HEK293 (cell line): ENCODE measurements at regions of chr22 and their contacts with region 1.

Region 1: DNA sequence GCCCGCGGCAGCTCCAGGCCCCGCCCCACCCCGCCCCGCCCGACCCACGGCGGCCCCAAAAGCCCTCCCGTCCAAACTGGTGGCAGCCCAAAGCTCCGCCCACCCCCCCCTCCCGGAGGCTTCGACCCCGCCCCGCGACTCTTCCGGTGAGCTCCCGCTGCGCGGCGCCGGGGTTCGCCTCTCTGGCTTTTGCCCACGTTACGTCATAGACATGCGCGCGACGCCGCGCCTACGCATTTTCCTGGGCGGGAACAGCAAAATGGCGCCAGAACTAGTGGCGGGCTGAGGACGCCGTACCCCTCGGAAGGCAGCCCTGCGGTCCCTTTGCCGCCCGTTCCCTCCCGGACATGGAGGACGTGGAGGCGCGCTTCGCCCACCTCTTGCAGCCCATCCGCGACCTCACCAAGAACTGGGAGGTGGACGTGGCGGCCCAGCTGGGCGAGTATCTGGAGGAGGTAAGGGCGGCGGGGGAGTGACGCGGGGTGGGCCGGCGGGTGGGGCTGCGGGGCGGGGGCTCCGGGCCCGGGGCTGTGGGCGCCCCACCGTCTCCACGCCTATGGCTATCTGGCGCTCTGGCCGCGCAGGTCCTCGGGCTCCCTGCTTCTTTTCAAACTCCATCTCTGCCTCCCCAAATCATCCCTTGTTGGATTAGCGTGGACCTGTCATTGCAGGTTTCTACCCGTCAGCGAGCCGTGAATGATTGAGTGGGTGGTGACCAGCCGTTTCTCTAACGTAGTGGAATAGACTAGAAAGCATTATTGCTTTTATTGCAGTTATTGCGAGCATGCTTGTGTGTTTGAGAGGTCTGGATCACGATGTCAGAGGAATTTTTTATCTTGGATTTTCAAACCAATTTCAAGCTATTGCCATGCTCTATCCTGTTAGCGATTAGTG is at the start of gene NCAPH2:
- H3K4me3 ChIP-seq: peak within 1 kb of the TSS; percentile 100
- H3K27ac ChIP-seq: peak within 1 kb of the TSS; percentile 97
- H3K4me1 ChIP-seq: peaks cover 8% of the 10 kb centered on the region
- CTCF ChIP-seq: no peak

Region 2: GRCh38 chr22:50469377-50470305 is 38.6 kb before region 1 on chr22:
- CTCF ChIA-PET with region 1: no interaction called
- POLR2A ChIA-PET with region 1: interaction called, 12 read pairs
- H3K4me3 ChIP-seq: no peak overlapping the region
- H3K27ac ChIP-seq: peak overlapping the region; percentile 51; the same call in 1 of the 2 replicates
- H3K4me1 ChIP-seq: peaks cover 23% of the 10 kb centered on the region
- CTCF ChIP-seq: no peak